ENCODE measurements at regions of chr9 and their contacts with region 1.

Region 1: DNA sequence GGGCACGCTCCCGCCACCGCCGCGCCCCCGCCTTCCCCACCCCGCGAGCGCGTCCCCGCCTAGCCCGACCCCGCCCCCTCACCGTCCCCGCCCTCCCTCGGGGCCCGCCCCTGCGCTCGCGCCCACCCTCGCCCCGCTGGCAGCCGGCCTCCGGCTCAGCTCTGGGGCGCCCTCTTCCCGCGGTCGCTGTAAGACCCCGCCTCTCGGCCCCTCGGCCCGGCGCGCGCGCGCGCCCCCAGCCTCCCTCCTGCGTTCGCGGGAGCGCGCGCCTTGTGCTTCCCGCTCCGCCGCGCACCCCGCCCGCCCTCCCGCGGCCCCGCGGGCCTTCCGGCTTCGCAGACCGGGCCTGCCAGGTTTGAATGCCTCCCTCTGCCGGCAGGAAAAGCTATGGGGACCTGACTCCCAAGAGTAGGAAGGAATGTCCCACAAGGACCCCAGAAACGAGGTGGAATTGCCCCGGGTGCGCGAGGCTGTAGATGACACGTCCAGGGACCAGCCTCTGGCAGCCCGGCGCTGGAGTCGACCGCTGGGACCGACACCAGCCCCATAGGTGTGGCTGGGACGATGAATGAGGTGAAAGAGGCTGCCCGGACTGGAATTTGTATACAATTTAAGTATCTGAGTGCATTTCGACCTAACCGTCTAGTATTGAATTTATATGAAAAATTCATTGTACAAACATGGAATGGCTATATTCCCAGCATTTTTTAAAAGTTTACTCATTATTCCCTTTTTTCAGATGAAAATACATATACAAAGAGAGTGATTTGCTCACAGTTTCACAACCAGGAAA is 416 bp upstream of the PTBP3 start:
- DNase-seq: peak; percentile 96
- H3K4me3 Mint-ChIP-seq: peak overlapping the region; percentile 92
- H3K27ac Mint-ChIP-seq: peak overlapping the region; percentile 97
- H3K4me1 Mint-ChIP-seq: peaks cover 31% of the 10 kb centered on the region
- H3K27me3 Mint-ChIP-seq: no peaks in the 10 kb centered on the region

Region 2: DNA sequence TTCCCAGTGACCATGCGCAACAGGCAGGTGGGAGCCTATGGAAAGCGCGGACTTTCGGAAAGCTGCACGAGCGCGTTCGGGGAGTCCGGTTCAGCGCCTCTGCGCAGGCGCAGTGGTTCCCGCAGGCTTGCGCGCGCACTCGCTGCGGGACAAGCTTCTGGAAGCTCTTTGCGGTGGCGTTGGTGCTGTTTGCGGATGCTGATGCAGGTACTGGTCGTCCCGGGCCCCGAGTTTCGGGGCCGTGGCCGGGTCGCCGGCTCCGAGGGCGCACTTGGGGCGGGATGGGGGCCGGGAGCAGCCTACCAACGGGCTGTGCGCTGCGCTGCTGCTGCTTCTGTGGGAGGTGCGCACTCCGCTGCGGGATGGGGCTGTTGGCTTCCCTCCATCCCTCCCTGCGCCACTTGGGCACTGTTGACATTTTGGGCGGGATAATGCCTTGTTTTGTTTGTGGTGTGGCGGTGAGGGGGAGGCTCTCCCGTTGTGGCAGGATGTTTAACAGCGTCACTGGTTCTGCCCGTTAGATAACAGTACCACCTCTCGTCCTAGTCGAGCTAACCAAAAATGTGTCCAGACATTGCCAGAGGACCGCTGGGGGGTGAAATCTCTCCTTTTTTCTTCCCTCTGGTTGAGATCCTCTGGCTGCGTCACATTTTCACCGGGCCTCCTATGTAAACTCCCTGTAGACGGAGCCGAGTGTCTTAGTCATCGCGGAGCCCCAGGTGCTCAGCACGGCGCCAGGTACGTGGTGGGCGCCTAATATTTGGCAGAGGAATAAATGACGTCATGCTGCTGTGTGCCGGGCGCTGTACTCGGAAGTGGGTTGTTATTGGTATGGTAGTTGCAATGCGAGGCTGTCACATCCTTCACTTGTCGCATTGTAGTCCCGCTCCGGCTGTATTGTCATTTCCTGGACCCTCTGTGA is 808.5 kb before region 1 on chr9 and contains the start of gene ZNF483:
- CTCF ChIA-PET with region 1: no interaction called
- POLR2A ChIA-PET with region 1: no interaction called
- intact Hi-C with region 1: loop called (anchors 1 kb)
- DNase-seq: peak; percentile 73
- H3K4me3 Mint-ChIP-seq: peak within 1 kb of the TSS; percentile 88
- H3K27ac Mint-ChIP-seq: peak within 1 kb of the TSS; percentile 72
- H3K4me1 Mint-ChIP-seq: peaks cover 13% of the 10 kb centered on the region
- H3K27me3 Mint-ChIP-seq: no peaks in the 10 kb centered on the region
- total RNA-seq, gene ZNF483: 2.9 to 3.4 TPM

Region 3: GRCh38 chr9:112097712-112098688 is 235.8 kb before region 1 on chr9:
- CTCF ChIA-PET with region 1: interaction called, 10 read pairs
- POLR2A ChIA-PET with region 1: interaction called, 3 read pairs
- intact Hi-C with region 1: loop called (anchors 1 kb)
- DNase-seq: peak; percentile 74
- H3K4me3 Mint-ChIP-seq: no peak overlapping the region
- H3K27ac Mint-ChIP-seq: no peak overlapping the region
- H3K4me1 Mint-ChIP-seq: peaks cover 22% of the 10 kb centered on the region
- H3K27me3 Mint-ChIP-seq: no peaks in the 10 kb centered on the region

Region 4: GRCh38 chr9:112249277-112249676 is 84.6 kb before region 1 on chr9:
- CTCF ChIA-PET with region 1: no interaction called
- POLR2A ChIA-PET with region 1: interaction called, 3 read pairs
- intact Hi-C with region 1: loop called (anchors 2 kb)
- DNase-seq: no peak
- H3K4me3 Mint-ChIP-seq: no peak overlapping the region
- H3K27ac Mint-ChIP-seq: no peak overlapping the region
- H3K4me1 Mint-ChIP-seq: peaks cover 35% of the 10 kb centered on the region
- H3K27me3 Mint-ChIP-seq: no peaks in the 10 kb centered on the region

Region 5: GRCh38 chr9:112348257-112349007 is 14.6 kb after region 1 on chr9:
- CTCF ChIA-PET with region 1: no interaction called
- POLR2A ChIA-PET with region 1: no interaction called
- intact Hi-C with region 1: loop called (anchors 2 kb)
- DNase-seq: peak; percentile 87
- H3K4me3 Mint-ChIP-seq: peak overlapping the region; percentile 76
- H3K27ac Mint-ChIP-seq: peak overlapping the region; percentile 80
- H3K4me1 Mint-ChIP-seq: peaks cover 13% of the 10 kb centered on the region
- H3K27me3 Mint-ChIP-seq: peaks cover 2% of the 10 kb centered on the region

Region 6: DNA sequence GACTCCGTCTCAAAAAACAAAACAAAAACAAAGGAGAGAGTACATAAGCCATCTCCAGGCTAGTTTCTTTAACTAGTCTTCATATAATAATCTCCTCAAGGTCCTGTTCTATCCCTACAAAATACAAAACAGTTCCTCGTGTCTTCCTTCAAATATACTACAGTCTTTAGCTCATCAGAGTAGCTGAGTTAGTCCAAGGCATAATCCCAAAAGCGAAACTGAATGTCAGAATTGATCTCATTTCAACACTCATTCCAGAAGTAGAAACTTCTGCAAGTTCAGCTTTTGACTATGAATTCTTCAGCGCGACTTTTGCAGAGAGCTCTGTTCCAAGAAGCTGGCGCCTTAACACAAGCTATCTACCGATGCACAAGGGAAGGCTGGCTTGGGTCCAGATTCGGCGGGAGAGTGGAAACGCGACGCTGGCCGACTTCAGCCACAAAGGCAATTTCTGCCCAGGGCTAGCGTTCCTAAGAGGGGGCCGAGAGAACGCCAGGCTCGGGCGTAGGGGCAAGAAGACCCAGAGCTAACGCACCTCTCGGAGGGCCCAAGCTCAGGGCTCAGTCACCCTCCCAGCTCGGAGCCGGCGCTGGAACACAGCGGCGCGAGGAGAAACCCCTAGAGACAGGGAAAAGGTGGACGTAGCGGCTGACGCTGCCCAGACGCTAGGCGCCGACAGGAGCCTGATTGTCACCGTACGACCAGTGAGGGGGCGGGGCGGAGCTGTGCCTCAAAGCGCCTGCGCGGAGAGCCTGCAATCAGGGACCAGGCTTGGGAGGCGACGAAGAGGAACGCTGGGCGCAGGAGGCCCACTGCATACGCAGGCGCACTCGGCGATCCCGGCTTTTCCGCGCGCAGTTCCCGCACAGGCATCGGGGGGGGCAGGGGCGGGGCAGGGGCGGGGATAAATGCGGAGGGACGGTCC is 45.6 kb after region 1 on chr9:
- CTCF ChIA-PET with region 1: interaction called, 3 read pairs
- POLR2A ChIA-PET with region 1: interaction called, 13 read pairs
- intact Hi-C with region 1: loop called (anchors 1 kb)
- DNase-seq: peak; percentile 99
- H3K4me3 Mint-ChIP-seq: peak overlapping the region; percentile 97
- H3K27ac Mint-ChIP-seq: peak overlapping the region; percentile 98
- H3K4me1 Mint-ChIP-seq: peaks cover 40% of the 10 kb centered on the region
- H3K27me3 Mint-ChIP-seq: no peaks in the 10 kb centered on the region

Region 7: GRCh38 chr9:112750111-112750767 is 416.4 kb after region 1 on chr9 and contains the start of gene SNX30:
- CTCF ChIA-PET with region 1: no interaction called
- POLR2A ChIA-PET with region 1: no interaction called
- intact Hi-C with region 1: loop called (anchors 5 kb)
- DNase-seq: peak; percentile 87
- H3K4me3 Mint-ChIP-seq: peak within 1 kb of the TSS; percentile 76
- H3K27ac Mint-ChIP-seq: peak within 1 kb of the TSS; percentile 78
- H3K4me1 Mint-ChIP-seq: peaks cover 56% of the 10 kb centered on the region
- H3K27me3 Mint-ChIP-seq: no peaks in the 10 kb centered on the region
- total RNA-seq, gene SNX30: 4.4 to 4.8 TPM

Measured in activated CD4-positive, alpha-beta memory T cell treated with anti-CD3 and anti-CD28 coated beads for 36 hours (primary cell).